Endothelial cell of umbilical vein (primary cell): ENCODE measurements at regions of chr1 and their contacts with region 1.

Region 1: DNA sequence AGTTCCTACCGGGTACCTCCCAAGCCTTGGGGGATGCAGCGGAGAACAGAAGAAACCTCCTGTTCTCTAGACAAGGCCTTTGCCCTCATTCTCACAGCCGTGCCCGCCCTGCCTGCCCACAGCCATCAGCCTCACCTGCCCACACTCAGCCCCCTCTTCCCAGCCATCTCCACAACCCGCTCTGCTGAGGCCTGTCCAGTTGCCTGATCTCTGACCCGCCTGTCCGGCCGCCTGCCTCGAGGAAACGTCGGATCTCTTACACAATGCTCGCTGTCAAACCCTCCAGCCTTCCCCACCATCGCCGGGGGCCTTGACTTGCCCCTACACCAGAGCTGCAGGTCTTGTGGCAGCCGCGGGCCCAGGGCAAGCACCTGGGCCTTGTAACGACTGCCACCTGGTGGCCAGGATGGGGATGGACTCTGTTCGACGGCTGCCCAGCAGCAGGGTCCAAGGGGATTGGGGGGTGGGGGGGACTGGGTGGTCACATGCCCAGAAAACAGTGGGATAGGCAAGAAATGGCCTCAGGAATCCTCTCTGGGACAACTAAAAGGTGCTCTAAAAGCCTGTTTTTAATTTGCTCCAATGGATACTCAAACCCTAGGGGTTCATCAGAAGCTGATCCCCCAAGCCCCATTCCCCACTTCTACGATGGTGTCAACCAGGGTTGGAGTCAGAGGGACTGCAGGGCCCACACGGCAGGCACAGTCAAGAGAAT is 31.0 kb downstream of the SLC45A1 start:
- DNase-seq: peak; percentile 48
- H3K4me3 ChIP-seq: no peak overlapping the region
- H3K27ac ChIP-seq: no peak overlapping the region
- H3K4me1 ChIP-seq: peaks cover 16% of the 10 kb centered on the region
- H3K27me3 ChIP-seq: no peaks in the 10 kb centered on the region
- CTCF ChIP-seq: peak; percentile 65 to 84
- POLR2A ChIP-seq: no peak

Region 2: GRCh38 chr1:7975212-7975865 is 373.6 kb before region 1 on chr1:
- CTCF ChIA-PET with region 1: interaction called, 131 read pairs
- POLR2A ChIA-PET with region 1: interaction called, 4 read pairs
- dilution Hi-C with region 1: no loop called
- intact Hi-C with region 1: loop called (anchors 1 kb)
- DNase-seq: peak; percentile 81
- H3K4me3 ChIP-seq: no peak overlapping the region
- H3K27ac ChIP-seq: no peak overlapping the region
- H3K4me1 ChIP-seq: no peaks in the 10 kb centered on the region
- H3K27me3 ChIP-seq: no peaks in the 10 kb centered on the region
- CTCF ChIP-seq: peak; percentile 85 to 94
- POLR2A ChIP-seq: no peak

Region 3: GRCh38 chr1:7983086-7983778 is 365.7 kb before region 1 on chr1:
- CTCF ChIA-PET with region 1: interaction called, 131 read pairs
- POLR2A ChIA-PET with region 1: interaction called, 6 read pairs
- dilution Hi-C with region 1: no loop called
- intact Hi-C with region 1: loop called (anchors 1 kb)
- DNase-seq: no peak
- H3K4me3 ChIP-seq: no peak overlapping the region
- H3K27ac ChIP-seq: no peak overlapping the region
- H3K4me1 ChIP-seq: no peaks in the 10 kb centered on the region
- H3K27me3 ChIP-seq: no peaks in the 10 kb centered on the region
- CTCF ChIP-seq: no peak
- POLR2A ChIP-seq: no peak

Region 4: GRCh38 chr1:8127171-8127641 is 221.7 kb before region 1 on chr1:
- CTCF ChIA-PET with region 1: no interaction called
- POLR2A ChIA-PET with region 1: no interaction called
- dilution Hi-C with region 1: no loop called
- intact Hi-C with region 1: no loop called
- DNase-seq: no peak
- H3K4me3 ChIP-seq: no peak overlapping the region
- H3K27ac ChIP-seq: no peak overlapping the region
- H3K4me1 ChIP-seq: peaks cover 11% of the 10 kb centered on the region
- H3K27me3 ChIP-seq: no peaks in the 10 kb centered on the region
- CTCF ChIP-seq: no peak
- POLR2A ChIP-seq: no peak

Region 5: DNA sequence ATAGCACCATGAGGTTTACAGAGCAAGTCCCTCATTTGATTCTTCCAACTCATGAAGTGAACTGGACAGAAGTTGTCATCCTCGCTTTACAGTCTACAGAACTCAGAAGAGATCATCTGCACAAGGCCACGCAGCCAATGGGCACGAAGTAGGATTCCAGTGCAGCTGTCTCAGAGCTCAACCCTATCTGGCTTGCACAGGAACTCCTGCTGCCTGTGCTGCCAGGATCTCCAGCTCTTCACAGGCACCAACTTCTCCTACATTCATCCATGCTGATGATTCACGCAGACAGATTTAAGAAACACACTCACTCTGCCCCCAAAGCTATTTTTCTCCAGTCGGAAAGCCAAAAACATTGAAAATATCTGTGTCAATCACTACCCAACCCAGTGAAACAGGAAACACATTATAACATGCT is 311.5 kb after region 1 on chr1:
- CTCF ChIA-PET with region 1: no interaction called
- POLR2A ChIA-PET with region 1: no interaction called
- dilution Hi-C with region 1: no loop called
- intact Hi-C with region 1: no loop called
- DNase-seq: peak; percentile 92
- H3K4me3 ChIP-seq: no peak overlapping the region
- H3K27ac ChIP-seq: peak overlapping the region; percentile 70
- H3K4me1 ChIP-seq: peaks cover 34% of the 10 kb centered on the region
- H3K27me3 ChIP-seq: no peaks in the 10 kb centered on the region
- CTCF ChIP-seq: no peak
- POLR2A ChIP-seq: no peak

Region 6: GRCh38 chr1:8835941-8836643 is 487.2 kb after region 1 on chr1:
- CTCF ChIA-PET with region 1: no interaction called
- POLR2A ChIA-PET with region 1: no interaction called
- dilution Hi-C with region 1: no loop called
- intact Hi-C with region 1: no loop called
- DNase-seq: no peak
- H3K4me3 ChIP-seq: no peak overlapping the region
- H3K27ac ChIP-seq: no peak overlapping the region
- H3K4me1 ChIP-seq: no peaks in the 10 kb centered on the region
- H3K27me3 ChIP-seq: no peaks in the 10 kb centered on the region
- CTCF ChIP-seq: no peak
- POLR2A ChIP-seq: no peak